WTC11 (cell line): ENCODE measurements at regions of chr9 and their contacts with region 1.

Region 1: GRCh38 chr9:69421908-69422801 is 97.1 kb downstream of the ENTREP1 start:
- DNase-seq: peak; percentile 69
- ATAC-seq: peak; percentile 86
- H3K4me3 Mint-ChIP-seq: no peak overlapping the region
- H3K27ac Mint-ChIP-seq: no peak overlapping the region
- H3K4me1 Mint-ChIP-seq: peaks cover 11% of the 10 kb centered on the region
- H3K27me3 Mint-ChIP-seq: peaks cover 8% of the 10 kb centered on the region; the same call in 1 of the 2 replicates
- CTCF ChIP-seq: peak; percentile 83

Region 2: DNA sequence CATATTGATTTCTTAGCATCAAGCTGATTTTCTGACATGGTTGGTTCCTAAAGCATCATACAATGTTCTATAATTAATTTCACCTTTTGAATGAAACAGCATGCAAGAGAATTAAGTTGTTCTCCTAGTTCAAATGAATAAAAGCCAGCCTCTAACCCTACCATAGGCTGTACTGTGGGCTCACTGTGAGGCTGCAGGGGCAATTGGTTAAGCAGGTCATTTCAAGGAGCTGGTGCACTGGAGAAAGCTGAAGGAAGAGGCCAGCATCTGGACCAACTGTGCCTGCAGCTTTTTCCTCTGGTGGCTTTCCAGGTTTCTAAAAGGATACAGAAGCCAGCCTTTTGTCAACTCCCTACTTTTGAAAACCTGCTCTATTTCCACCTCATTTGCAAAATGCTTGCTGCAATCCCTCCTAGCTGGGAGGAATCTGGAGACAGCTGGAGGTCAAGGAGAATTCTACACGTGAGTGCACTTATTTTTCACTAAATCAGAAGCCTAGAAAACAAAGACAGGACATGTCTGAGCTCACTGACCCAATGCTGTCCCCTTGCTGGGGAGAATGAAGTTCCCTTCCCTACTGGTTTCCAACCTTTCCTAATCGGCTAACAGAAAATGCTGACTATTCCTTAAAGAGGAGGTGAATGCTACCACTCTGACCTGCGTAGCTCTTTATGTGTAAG is 91.1 kb after region 1 on chr9:
- CTCF ChIA-PET with region 1: interaction called, 10 read pairs
- POLR2A ChIA-PET with region 1: no interaction called
- DNase-seq: no peak
- ATAC-seq: peak; percentile 20; the same call in 1 of the 2 replicates
- H3K4me3 Mint-ChIP-seq: no peak overlapping the region
- H3K27ac Mint-ChIP-seq: no peak overlapping the region
- H3K4me1 Mint-ChIP-seq: peaks cover 11% of the 10 kb centered on the region
- H3K27me3 Mint-ChIP-seq: no peaks in the 10 kb centered on the region
- CTCF ChIP-seq: no peak

Region 3: DNA sequence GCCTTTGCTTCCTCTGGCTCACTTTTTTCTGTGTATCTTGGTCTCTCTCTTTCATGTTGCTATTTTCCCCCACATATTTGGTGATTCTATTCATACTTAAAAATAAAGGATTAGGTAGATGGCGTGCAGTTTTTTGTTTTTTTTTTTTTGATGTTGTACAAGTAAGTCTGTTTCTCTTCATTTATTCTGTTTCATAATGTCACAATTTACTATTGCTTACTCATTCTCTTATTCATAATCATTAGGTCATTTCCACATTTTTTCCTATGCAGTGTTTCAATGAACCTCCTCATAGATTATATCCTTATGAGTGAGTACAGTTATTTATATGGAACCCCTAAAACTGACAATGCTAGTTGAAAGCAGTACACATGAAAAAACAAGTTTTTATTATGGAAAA is 113.8 kb after region 1 on chr9:
- CTCF ChIA-PET with region 1: interaction called, 13 read pairs
- POLR2A ChIA-PET with region 1: no interaction called
- DNase-seq: no peak
- ATAC-seq: no peak
- H3K4me3 Mint-ChIP-seq: no peak overlapping the region
- H3K27ac Mint-ChIP-seq: no peak overlapping the region
- H3K4me1 Mint-ChIP-seq: peaks cover 3% of the 10 kb centered on the region; the same call in 1 of the 2 replicates
- H3K27me3 Mint-ChIP-seq: no peaks in the 10 kb centered on the region
- CTCF ChIP-seq: no peak

Region 4: GRCh38 chr9:69549310-69550202 is 127.4 kb after region 1 on chr9:
- CTCF ChIA-PET with region 1: interaction called, 65 read pairs
- POLR2A ChIA-PET with region 1: interaction called, 3 read pairs
- DNase-seq: no peak
- ATAC-seq: peak; percentile 67
- H3K4me3 Mint-ChIP-seq: no peak overlapping the region
- H3K27ac Mint-ChIP-seq: no peak overlapping the region
- H3K4me1 Mint-ChIP-seq: peaks cover 9% of the 10 kb centered on the region
- H3K27me3 Mint-ChIP-seq: no peaks in the 10 kb centered on the region
- CTCF ChIP-seq: peak; percentile 83

Region 5: GRCh38 chr9:69931340-69931739 is 509.2 kb after region 1 on chr9:
- CTCF ChIA-PET with region 1: interaction called, 11 read pairs
- POLR2A ChIA-PET with region 1: no interaction called
- DNase-seq: no peak
- ATAC-seq: peak; percentile 57
- H3K4me3 Mint-ChIP-seq: no peak overlapping the region
- H3K27ac Mint-ChIP-seq: no peak overlapping the region
- H3K4me1 Mint-ChIP-seq: 0 out of 2 replicates have a peak, but pooled peaks cover 4% of the 10 kb centered on the region
- H3K27me3 Mint-ChIP-seq: peaks cover 6% of the 10 kb centered on the region
- CTCF ChIP-seq: 0 out of 2 replicates have a peak, but pooled peaks have one; percentile 14